HEK293 (cell line): ENCODE measurements at regions of chr20 and their contacts with region 1.

Region 1: DNA sequence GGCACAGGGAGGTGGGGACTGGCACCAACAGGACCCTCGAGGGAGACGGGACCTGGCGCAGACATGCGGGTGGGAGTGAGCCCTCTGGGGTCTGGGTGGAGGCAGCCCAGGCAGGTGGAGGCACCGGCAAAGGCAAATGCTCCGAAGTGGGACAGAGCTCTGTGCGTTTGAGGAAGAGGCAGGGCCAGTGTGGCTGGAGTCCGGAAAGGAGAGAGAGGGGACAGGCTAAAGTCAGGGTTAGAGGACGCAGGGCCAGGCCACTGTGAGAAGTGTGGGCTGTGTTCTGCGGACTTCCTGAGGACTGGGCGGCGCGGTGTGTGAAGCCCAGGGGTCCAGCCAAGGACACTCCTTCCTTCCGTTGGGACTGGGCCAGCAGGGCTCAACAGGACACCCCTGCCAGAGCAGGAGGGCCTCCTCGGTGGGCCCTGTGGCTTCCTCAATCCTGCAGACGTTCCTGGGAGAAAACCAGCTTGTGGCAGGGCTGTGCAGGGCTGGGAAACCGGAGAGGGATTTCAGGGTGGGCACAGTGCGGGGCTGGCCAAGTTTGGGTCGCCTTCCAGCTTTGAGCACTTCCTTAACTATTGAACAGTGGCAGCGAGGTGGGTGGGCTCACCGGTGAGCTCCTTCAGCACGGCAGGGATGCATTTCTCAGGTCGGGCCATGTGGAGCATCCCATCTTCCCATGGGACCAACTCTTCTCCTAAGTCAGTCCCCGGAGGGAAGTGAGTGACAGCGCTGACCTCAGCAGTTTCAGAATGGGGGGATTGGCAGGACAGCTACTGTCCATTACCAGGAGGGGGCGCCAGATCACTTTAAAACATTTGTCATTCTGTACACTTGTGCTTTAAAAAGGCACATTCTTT is 22.5 kb downstream of the MOCS3 start:
- H3K4me3 ChIP-seq: no peak overlapping the region
- H3K27ac ChIP-seq: no peak overlapping the region
- H3K4me1 ChIP-seq: no peaks in the 10 kb centered on the region
- CTCF ChIP-seq: peak; percentile 27; the same call in 1 of the 2 replicates

Region 2: DNA sequence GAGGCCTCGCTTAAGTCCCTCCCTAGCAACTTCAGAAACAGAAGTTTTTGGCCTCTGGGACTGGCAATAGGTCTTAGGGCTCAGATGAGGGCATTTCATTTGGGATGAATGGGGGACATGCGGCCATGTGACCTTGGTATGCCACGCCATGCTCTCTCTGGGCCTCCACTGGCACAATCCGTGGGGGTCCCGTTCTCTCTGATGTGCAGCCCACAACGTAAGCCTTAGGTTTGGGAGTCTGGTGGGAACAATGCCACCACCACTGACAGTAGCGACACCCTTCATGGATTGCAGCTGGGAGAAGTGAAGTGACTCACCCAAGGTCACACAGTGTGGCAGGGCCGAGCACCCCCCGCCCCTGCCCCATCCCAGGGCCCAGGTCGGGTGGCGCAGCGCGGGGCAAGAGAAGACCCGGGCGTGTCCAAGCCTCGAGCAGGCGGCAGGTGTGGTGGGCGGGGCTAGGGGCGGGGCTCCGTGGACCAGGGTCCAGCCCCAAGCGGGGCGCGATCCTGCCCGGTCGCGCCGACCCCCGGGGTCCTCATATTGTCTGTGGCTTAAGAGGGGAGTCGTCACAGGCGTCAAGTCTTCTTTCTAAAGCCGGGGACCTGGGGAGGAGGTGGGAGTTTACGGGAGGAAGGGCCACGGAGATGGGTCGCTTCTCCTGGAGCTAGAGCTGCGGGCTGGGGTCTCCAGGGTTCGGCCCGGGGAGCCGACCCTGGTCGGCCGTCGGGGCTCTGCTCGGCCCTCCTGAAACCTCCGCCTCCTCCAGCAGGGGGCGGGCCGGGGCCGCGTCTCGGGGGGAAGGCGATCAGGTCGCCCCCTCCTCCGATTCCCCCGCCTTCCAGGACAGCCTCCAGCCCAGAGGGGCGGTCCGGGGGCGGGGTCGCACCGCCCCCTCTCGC is 791.1 kb before region 1 on chr20:
- CTCF ChIA-PET with region 1: no interaction called
- POLR2A ChIA-PET with region 1: no interaction called
- H3K4me3 ChIP-seq: peak overlapping the region; percentile 61
- H3K27ac ChIP-seq: no peak overlapping the region; the same call in 1 of the 2 replicates
- H3K4me1 ChIP-seq: peaks cover 10% of the 10 kb centered on the region
- CTCF ChIP-seq: peak; percentile 63; the same call in 1 of the 2 replicates

Region 3: DNA sequence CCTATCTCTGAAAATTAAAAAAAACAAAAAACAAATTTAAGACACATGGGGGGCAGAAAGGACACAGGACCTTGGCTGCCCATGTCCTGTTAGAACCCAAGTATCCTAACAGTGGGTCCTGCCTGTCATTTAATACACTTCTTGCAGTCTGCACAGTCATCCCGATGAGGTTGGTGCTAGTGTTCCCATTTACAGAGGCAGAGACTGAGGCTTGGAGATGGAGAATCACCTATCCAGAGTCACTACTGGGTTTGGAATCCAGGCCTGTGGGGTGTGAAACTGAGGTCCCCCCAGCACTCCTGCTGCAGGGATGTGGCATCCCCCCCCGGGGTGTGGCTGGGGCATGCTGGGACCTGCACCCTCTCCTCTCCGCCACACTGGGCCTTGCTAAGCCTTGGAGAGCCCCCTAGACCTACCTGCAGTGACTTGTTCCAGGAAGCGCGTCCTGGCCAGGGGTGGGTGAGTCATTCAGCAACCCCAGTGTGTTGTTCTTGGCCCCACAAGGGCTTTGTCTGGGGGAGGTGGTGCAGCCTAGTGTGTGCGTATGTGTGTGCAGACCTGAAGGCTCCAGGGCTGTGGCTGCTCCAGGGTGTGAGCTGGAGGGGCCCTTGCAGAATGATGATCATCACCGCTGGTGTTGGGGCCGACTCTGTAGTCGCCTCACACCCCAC is 136.5 kb before region 1 on chr20:
- CTCF ChIA-PET with region 1: no interaction called
- POLR2A ChIA-PET with region 1: no interaction called
- H3K4me3 ChIP-seq: no peak overlapping the region
- H3K27ac ChIP-seq: no peak overlapping the region
- H3K4me1 ChIP-seq: peaks cover 4% of the 10 kb centered on the region; the same call in 1 of the 2 replicates
- CTCF ChIP-seq: no peak

Region 4: DNA sequence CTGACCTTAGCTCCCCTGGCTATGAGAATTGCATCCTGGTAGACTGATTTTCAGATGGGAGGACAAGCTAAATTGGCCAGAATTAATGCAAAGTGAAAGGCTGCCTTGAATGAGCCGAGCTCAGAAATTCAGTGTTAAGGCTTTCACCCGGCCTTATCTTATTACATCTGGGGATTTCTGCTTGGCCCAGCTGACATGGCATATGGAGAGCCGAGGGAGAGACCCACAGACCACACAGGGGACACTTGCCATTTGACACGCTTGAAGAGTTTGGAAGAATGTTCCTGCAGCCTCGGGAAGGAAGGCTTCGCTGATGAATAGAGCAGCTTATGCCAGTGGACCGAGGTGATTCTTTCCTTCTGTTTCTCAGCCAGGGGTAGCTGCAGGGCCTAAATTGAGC is 13.5 kb before region 1 on chr20:
- CTCF ChIA-PET with region 1: interaction called, 12 read pairs
- POLR2A ChIA-PET with region 1: no interaction called
- H3K4me3 ChIP-seq: no peak overlapping the region
- H3K27ac ChIP-seq: no peak overlapping the region
- H3K4me1 ChIP-seq: no peaks in the 10 kb centered on the region
- CTCF ChIP-seq: no peak

Region 5: GRCh38 chr20:50992733-50993457 is 11.8 kb after region 1 on chr20:
- CTCF ChIA-PET with region 1: interaction called, 31 read pairs
- POLR2A ChIA-PET with region 1: no interaction called
- H3K4me3 ChIP-seq: no peak overlapping the region
- H3K27ac ChIP-seq: no peak overlapping the region
- H3K4me1 ChIP-seq: no peaks in the 10 kb centered on the region
- CTCF ChIP-seq: peak; percentile 59

Region 6: DNA sequence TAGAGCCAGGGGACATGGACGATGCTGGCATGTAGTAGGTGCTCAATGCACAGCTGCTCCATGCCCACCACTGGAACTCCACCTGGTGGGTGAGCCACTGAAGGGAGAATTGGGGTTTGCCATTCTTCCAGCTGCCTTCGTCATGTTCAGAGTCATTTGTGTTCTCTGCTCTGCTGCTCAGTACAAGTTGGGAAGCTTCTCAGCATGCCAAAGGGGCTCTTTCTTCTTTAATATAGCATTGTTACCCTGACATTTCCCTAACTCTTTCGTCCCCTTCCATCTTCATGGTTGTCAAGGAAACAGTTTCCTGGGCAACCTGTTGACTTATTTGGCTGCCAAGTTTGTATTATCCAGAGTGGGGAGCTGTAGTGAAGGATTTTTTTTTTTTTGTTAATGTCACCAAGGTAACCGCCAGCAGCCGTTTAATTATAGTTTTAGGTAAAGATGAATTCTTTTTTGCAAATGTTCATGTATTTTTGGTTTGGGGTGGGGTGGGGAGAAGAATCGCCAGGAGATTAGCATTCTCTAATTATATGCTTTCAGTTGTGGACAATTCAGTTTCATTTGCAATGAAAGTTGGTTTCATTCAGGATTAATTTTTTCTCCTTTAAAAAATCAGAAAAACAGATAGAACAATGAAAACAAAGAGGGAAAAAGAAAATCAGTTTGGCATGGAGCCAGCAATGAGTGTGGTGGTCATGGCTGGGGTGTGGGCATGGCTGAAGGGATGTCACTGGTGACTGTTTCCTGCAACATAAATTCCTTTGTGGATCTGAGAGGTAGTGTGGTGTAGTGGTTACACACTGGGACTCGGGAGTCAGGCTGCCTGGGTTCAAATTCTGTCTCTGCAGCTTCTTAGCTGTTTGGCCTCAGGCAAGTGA is 114.8 kb after region 1 on chr20:
- CTCF ChIA-PET with region 1: no interaction called
- POLR2A ChIA-PET with region 1: no interaction called
- H3K4me3 ChIP-seq: no peak overlapping the region
- H3K27ac ChIP-seq: no peak overlapping the region
- H3K4me1 ChIP-seq: no peaks in the 10 kb centered on the region
- CTCF ChIP-seq: no peak